Stomach (tissue), 19 donors: ENCODE measurements at regions of chr22 and their contacts with region 1.

Region 1: GRCh38 chr22:38051900-38052862 is 5.0 kb upstream of the PICK1 start:
- DNase-seq: peak; percentile 86 to 95
- H3K4me3 ChIP-seq: no peak overlapping the region
- H3K27ac ChIP-seq: no peak overlapping the region
- H3K4me1 ChIP-seq: peaks cover 0 to 17% (median 14%) of the 10 kb centered on the region in 4 donors
- H3K27me3 ChIP-seq: peaks cover 0 to 22% (median 0%) of the 10 kb centered on the region in 3 donors
- CTCF ChIP-seq: peak in 5 of 7 experiments; percentile 83 to 90 (median 88)
- EP300 ChIP-seq: no peak
- POLR2A ChIP-seq: no peak

Region 2: GRCh38 chr22:37933711-37934376 is 118.3 kb before region 1 on chr22:
- intact Hi-C with region 1: no loop called
- DNase-seq: peak; percentile 95
- H3K4me3 ChIP-seq: no peak overlapping the region
- H3K27ac ChIP-seq: peak overlapping the region; percentile 59 to 83 (median 78)
- H3K4me1 ChIP-seq: peaks cover 53 to 64% (median 58%) of the 10 kb centered on the region in 4 donors
- H3K27me3 ChIP-seq: no peaks in the 10 kb centered on the region
- CTCF ChIP-seq: peak in 6 of 7 experiments; percentile 68 to 98 (median 96)
- EP300 ChIP-seq: no peak
- POLR2A ChIP-seq: no peak

Region 3: DNA sequence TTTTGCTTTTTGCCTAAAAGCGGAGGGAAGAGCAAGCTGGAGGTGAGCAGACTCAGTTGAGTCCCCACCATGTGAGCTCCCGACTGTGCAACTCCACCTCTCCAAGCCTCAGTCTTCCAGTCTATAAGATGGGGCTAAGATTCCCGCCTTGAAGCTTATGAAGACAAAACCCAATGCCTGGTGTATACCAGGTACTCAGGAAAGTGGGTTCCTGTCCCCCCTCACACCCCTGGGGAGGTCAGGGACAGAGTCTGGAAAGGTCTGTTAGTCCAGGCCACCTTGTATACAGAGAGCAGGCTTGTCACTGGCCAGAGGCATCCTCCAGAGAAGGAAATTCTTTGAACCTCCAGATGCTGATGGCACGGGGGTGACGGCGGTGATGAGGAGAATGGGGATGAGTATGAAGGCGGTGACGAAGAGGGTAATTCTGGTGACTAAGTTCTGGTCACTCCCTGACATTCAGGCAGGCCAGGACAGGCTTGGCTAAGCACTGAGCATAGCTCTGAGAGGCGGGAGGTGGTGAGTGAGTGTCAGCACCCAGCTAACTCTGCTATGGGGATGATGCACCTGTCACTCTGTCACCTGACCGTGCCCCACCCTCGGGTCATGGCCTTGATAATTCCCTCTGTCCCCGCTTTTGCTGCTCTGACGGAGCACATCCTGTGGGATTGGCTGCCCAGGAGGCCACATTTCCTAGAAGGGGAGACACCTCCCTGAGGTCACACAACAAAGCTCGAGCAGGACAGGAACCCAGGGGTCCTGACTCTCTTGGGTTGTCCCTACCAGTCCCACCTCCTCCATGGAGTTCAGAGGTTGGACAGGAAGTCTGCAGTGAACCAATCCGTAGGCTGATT is 295.9 kb after region 1 on chr22:
- intact Hi-C with region 1: loop called (anchors 10 kb)
- DNase-seq: peak in 1 of 2 donors; percentile 17
- H3K4me3 ChIP-seq: no peak overlapping the region
- H3K27ac ChIP-seq: no peak overlapping the region
- H3K4me1 ChIP-seq: peaks cover 0 to 4% (median 3%) of the 10 kb centered on the region in 4 donors
- H3K27me3 ChIP-seq: peaks cover 0 to 21% (median 0%) of the 10 kb centered on the region in 3 donors
- CTCF ChIP-seq: no peak
- EP300 ChIP-seq: no peak
- POLR2A ChIP-seq: no peak